HepG2 (cell line): ENCODE measurements at regions of chr5 and their contacts with region 1.

Region 1: GRCh38 chr5:73663860-73664240 is 37.9 kb downstream of the ARHGEF28 start:
- DNase-seq: peak; percentile 49
- ATAC-seq: peak; percentile 81
- H3K4me3 ChIP-seq: peak overlapping the region in 1 of 3 experiments; percentile 23; a peak in 3 of 6 replicates
- H3K27ac ChIP-seq: peak overlapping the region; percentile 65
- H3K4me1 ChIP-seq: peaks cover 53% of the 10 kb centered on the region
- H3K27me3 ChIP-seq: no peaks in the 10 kb centered on the region
- CTCF ChIP-seq: no peak
- EP300 ChIP-seq: no peak
- POLR2A ChIP-seq: no peak
- RAD21 ChIP-seq: no peak

Region 2: GRCh38 chr5:73636408-73636807 is 27.4 kb before region 1 on chr5:
- CTCF ChIA-PET with region 1: no interaction called
- POLR2A ChIA-PET with region 1: no interaction called
- in situ Hi-C with region 1: no loop called
- intact Hi-C with region 1: no loop called
- DNase-seq: no peak
- ATAC-seq: no peak
- H3K4me3 ChIP-seq: no peak overlapping the region
- H3K27ac ChIP-seq: no peak overlapping the region
- H3K4me1 ChIP-seq: peaks cover 48% of the 10 kb centered on the region
- H3K27me3 ChIP-seq: no peaks in the 10 kb centered on the region
- CTCF ChIP-seq: no peak
- EP300 ChIP-seq: no peak
- POLR2A ChIP-seq: no peak
- RAD21 ChIP-seq: no peak

Region 3: GRCh38 chr5:73648515-73648914 is 15.3 kb before region 1 on chr5:
- CTCF ChIA-PET with region 1: no interaction called
- POLR2A ChIA-PET with region 1: no interaction called
- in situ Hi-C with region 1: no loop called
- intact Hi-C with region 1: no loop called
- DNase-seq: no peak
- ATAC-seq: no peak
- H3K4me3 ChIP-seq: no peak overlapping the region
- H3K27ac ChIP-seq: no peak overlapping the region
- H3K4me1 ChIP-seq: peaks cover 33% of the 10 kb centered on the region
- H3K27me3 ChIP-seq: no peaks in the 10 kb centered on the region
- CTCF ChIP-seq: no peak
- EP300 ChIP-seq: no peak
- POLR2A ChIP-seq: no peak
- RAD21 ChIP-seq: no peak

Region 4: GRCh38 chr5:73678322-73678740 is 14.5 kb after region 1 on chr5:
- CTCF ChIA-PET with region 1: no interaction called
- POLR2A ChIA-PET with region 1: interaction called, 14 read pairs
- in situ Hi-C with region 1: no loop called
- intact Hi-C with region 1: no loop called
- DNase-seq: peak; percentile 95
- ATAC-seq: peak; percentile 98
- H3K4me3 ChIP-seq: peak overlapping the region in 2 of 3 experiments; percentile 32 to 33; a peak in 2 of 6 replicates
- H3K27ac ChIP-seq: peak overlapping the region; percentile 80
- H3K4me1 ChIP-seq: peaks cover 56% of the 10 kb centered on the region
- H3K27me3 ChIP-seq: no peaks in the 10 kb centered on the region
- CTCF ChIP-seq: no peak
- EP300 ChIP-seq: peak; percentile 71 to 72; a peak in 3 of 4 replicates
- POLR2A ChIP-seq: no peak
- RAD21 ChIP-seq: peak; percentile 35; the same call in 1 of the 2 replicates